ENCODE measurements at regions of chr3 and their contacts with region 1.

Region 1: GRCh38 chr3:42443819-42444436 is 33.5 kb upstream of the LYZL4 start:
- DNase-seq: peak; percentile 85
- H3K4me3 ChIP-seq: peak overlapping the region in 1 of 2 experiments; percentile 42; a peak in 1 of 4 replicates
- H3K27ac ChIP-seq: no peak overlapping the region
- H3K4me1 ChIP-seq: peaks cover 0 to 5% of the 10 kb centered on the region in 2 experiments; a peak in 1 of 4 replicates
- H3K27me3 ChIP-seq: peaks cover 5% of the 10 kb centered on the region; the same call in 1 of the 2 replicates
- CTCF ChIP-seq: peak; percentile 96
- EP300 ChIP-seq: no peak
- RAD21 ChIP-seq: peak; percentile 97

Region 2: GRCh38 chr3:42264399-42265058 is 179.4 kb before region 1 on chr3:
- CTCF ChIA-PET with region 1: interaction called, 12 read pairs
- POLR2A ChIA-PET with region 1: no interaction called
- DNase-seq: peak; percentile 67
- H3K4me3 ChIP-seq: no peak overlapping the region; a peak in 1 of 4 replicates
- H3K27ac ChIP-seq: no peak overlapping the region
- H3K4me1 ChIP-seq: peaks cover 0 to 8% of the 10 kb centered on the region in 2 experiments; a peak in 1 of 4 replicates
- H3K27me3 ChIP-seq: peaks cover 59% of the 10 kb centered on the region
- CTCF ChIP-seq: no peak
- EP300 ChIP-seq: no peak
- RAD21 ChIP-seq: no peak

Region 3: GRCh38 chr3:42366550-42366949 is 77.4 kb before region 1 on chr3:
- CTCF ChIA-PET with region 1: no interaction called
- POLR2A ChIA-PET with region 1: no interaction called
- DNase-seq: no peak
- H3K4me3 ChIP-seq: no peak overlapping the region
- H3K27ac ChIP-seq: no peak overlapping the region
- H3K4me1 ChIP-seq: no peaks in the 10 kb centered on the region
- H3K27me3 ChIP-seq: no peaks in the 10 kb centered on the region
- CTCF ChIP-seq: no peak
- EP300 ChIP-seq: no peak
- RAD21 ChIP-seq: no peak

Region 4: GRCh38 chr3:42518800-42519567 is 75.1 kb after region 1 on chr3:
- CTCF ChIA-PET with region 1: no interaction called
- POLR2A ChIA-PET with region 1: no interaction called
- DNase-seq: no peak
- H3K4me3 ChIP-seq: no peak overlapping the region
- H3K27ac ChIP-seq: no peak overlapping the region
- H3K4me1 ChIP-seq: no peaks in the 10 kb centered on the region; a peak in 1 of 4 replicates
- H3K27me3 ChIP-seq: no peaks in the 10 kb centered on the region
- CTCF ChIP-seq: 0 out of 2 replicates have a peak, but pooled peaks have one; percentile 26
- EP300 ChIP-seq: no peak
- RAD21 ChIP-seq: no peak

Region 5: DNA sequence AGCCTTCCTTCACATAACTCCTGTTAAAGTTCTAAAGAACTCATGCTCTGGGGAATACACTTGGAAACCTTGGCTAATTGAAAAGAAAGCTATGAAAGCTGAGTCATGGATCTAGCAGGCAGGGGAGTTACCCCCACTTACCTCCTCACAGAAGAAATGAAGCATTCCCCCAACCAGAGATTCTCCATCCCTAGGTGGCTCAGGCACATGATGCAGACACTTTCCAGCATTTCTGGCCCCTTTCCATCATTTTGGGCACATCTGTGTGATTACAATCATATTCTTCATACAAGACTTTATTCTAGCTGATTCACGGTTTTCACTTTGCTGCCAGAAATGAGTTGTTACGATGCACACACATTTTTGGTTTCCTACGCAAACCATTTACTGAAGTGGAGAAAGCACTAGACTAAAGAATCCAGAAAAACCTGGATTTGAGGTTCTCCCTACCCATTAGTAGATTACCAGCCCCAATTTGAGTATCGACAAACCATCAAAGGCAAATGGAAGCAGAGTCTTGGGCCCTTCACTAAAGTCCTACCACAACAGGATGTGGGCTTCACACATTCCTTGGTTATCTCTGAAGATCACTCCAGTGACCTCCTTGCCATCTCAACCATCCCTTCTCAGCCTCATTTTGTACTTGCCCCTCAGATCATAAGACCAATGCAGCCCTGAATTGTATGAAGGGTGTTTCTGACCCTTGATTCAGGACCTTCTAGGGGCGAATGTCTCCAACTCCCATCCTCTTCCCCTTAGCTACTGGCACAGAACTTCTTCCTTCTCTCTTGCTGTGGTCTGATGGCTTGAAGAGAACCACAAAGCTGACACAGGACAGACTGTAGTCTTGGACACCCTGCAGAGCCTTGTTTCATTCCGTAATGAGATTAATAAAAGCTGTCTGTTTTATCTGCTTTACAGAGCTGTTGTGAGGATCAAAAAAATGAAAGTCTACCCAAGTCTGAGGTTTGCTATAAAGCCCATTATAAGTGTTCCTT is 800.0 kb after region 1 on chr3:
- CTCF ChIA-PET with region 1: no interaction called
- POLR2A ChIA-PET with region 1: no interaction called
- DNase-seq: no peak
- H3K4me3 ChIP-seq: no peak overlapping the region
- H3K27ac ChIP-seq: no peak overlapping the region
- H3K4me1 ChIP-seq: no peaks in the 10 kb centered on the region; a peak in 1 of 4 replicates
- H3K27me3 ChIP-seq: no peaks in the 10 kb centered on the region; the same call in 1 of the 2 replicates
- CTCF ChIP-seq: no peak
- EP300 ChIP-seq: no peak
- RAD21 ChIP-seq: no peak